ENCODE measurements at regions of chr1 and their contacts with region 1.

Region 1: DNA sequence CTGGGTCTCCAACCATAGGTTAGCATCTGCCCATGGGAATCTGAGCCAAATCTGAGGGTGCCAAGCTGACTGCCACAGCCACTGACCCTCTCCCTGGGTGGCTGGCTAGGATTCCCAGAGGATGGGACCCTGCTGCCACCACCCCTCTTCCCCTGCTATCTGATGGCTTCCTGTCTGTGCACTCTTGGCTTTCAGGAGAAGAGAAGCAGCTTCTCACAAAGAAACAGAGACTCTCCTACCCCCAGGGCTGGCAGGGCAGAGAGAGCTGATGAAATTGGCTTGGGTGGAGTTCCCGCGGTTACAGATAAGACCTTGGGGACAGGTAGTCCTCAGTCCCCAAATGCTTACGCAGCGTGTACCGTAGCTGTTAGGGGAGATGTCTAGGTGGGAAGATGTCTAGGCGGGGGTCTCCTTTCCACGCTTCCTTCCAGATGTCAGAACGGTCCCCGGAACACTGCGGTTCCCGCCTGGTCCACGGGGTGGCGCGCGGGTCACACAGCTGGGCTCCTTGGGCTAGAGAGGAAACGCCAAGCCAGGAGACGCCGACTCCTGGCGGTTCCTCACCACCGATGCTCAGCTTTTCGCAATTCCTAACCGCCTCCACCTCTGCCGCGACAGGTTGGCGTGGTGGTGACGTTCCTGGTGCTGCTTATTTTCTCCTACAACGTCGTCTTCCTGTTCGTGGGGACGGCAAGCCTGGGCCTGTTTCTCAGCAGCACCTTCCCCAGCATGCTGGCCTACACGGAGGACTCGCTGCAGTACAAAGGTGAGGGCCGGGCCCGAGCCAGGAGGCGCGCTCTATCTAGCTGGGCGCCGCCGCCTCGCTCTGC is 40.1 kb downstream of the ELK4 start:
- DNase-seq: peak; percentile 87
- H3K4me3 ChIP-seq: peak overlapping the region; percentile 41 to 59
- H3K27ac ChIP-seq: peak overlapping the region in 1 of 2 experiments; percentile 36; a peak in 1 of 4 replicates
- H3K4me1 ChIP-seq: peaks cover 0 to 10% of the 10 kb centered on the region in 2 experiments; a peak in 1 of 4 replicates
- H3K27me3 ChIP-seq: no peaks in the 10 kb centered on the region
- CTCF ChIP-seq: peak; percentile 97
- EP300 ChIP-seq: no peak
- RAD21 ChIP-seq: peak; percentile 95

Region 2: GRCh38 chr1:205523891-205524793 is 67.6 kb before region 1 on chr1:
- CTCF ChIA-PET with region 1: interaction called, 35 read pairs
- POLR2A ChIA-PET with region 1: no interaction called
- DNase-seq: peak; percentile 87
- H3K4me3 ChIP-seq: peak overlapping the region in 1 of 2 experiments; percentile 14; a peak in 1 of 4 replicates
- H3K27ac ChIP-seq: no peak overlapping the region
- H3K4me1 ChIP-seq: peaks cover 0 to 12% of the 10 kb centered on the region in 2 experiments; a peak in 2 of 4 replicates
- H3K27me3 ChIP-seq: no peaks in the 10 kb centered on the region
- CTCF ChIP-seq: peak; percentile 81
- EP300 ChIP-seq: no peak
- RAD21 ChIP-seq: peak; percentile 98

Region 3: GRCh38 chr1:205543411-205544301 is 48.1 kb before region 1 on chr1:
- CTCF ChIA-PET with region 1: interaction called, 13 read pairs
- POLR2A ChIA-PET with region 1: no interaction called
- DNase-seq: peak; percentile 78
- H3K4me3 ChIP-seq: peak overlapping the region in 1 of 2 experiments; percentile 37; a peak in 2 of 4 replicates
- H3K27ac ChIP-seq: peak overlapping the region; percentile 23 to 88; a peak in 3 of 4 replicates
- H3K4me1 ChIP-seq: peaks cover 0 to 8% of the 10 kb centered on the region in 2 experiments; a peak in 1 of 4 replicates
- H3K27me3 ChIP-seq: no peaks in the 10 kb centered on the region
- CTCF ChIP-seq: no peak
- EP300 ChIP-seq: no peak
- RAD21 ChIP-seq: no peak

Region 4: DNA sequence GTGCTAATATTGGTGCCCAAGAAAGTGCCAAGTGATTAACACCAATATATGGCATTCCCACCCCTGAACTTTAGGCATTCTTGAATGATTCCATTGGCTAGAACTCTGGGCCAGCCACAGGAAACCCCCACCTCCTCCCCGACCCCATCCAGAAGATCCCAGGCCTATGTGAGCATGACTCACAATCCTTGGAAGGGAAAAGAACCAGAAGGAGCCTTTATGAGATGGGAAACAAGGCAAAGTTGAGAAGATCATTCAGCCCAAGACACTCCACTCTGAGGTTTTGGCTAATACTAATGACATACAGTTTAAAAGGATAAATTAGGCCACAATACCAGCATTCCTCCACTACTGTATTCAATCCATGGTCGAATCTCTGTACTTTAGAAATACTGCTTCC is 18.3 kb after region 1 on chr1:
- CTCF ChIA-PET with region 1: interaction called, 13 read pairs
- POLR2A ChIA-PET with region 1: no interaction called
- DNase-seq: no peak
- H3K4me3 ChIP-seq: no peak overlapping the region
- H3K27ac ChIP-seq: peak overlapping the region; percentile 12 to 72; a peak in 2 of 4 replicates
- H3K4me1 ChIP-seq: peaks cover 5 to 24% of the 10 kb centered on the region in 2 experiments; a peak in 3 of 4 replicates
- H3K27me3 ChIP-seq: no peaks in the 10 kb centered on the region
- CTCF ChIP-seq: no peak
- EP300 ChIP-seq: no peak
- RAD21 ChIP-seq: no peak

Region 5: DNA sequence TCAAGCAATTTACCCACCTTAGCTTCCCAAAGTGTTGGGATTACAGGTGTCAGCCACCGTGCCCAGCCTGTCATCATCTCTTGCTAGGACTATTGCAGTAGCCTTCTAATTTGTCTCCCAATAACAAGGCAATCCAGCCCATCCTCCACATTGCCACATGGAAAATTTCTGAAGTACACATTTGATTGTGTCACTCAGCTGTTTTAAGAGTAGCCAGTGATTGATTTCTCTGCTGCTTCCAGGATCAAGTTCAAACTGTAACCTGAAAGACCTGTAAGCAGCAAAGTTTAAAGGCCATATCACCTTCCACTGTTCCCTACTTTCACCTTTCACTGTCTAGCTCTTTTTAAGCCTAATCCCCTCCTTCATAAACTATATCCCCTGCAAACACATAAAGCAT is 47.8 kb after region 1 on chr1:
- CTCF ChIA-PET with region 1: interaction called, 18 read pairs
- POLR2A ChIA-PET with region 1: interaction called, 3 read pairs
- DNase-seq: no peak
- H3K4me3 ChIP-seq: no peak overlapping the region
- H3K27ac ChIP-seq: no peak overlapping the region
- H3K4me1 ChIP-seq: no peaks in the 10 kb centered on the region; a peak in 1 of 4 replicates
- H3K27me3 ChIP-seq: no peaks in the 10 kb centered on the region
- CTCF ChIP-seq: no peak
- EP300 ChIP-seq: no peak
- RAD21 ChIP-seq: no peak

Region 6: GRCh38 chr1:205711104-205712020 is 119.6 kb after region 1 on chr1:
- CTCF ChIA-PET with region 1: interaction called, 58 read pairs
- POLR2A ChIA-PET with region 1: interaction called, 4 read pairs
- DNase-seq: peak; percentile 70
- H3K4me3 ChIP-seq: no peak overlapping the region; a peak in 1 of 4 replicates
- H3K27ac ChIP-seq: peak overlapping the region; percentile 53 to 55
- H3K4me1 ChIP-seq: no peaks in the 10 kb centered on the region; a peak in 1 of 4 replicates
- H3K27me3 ChIP-seq: no peaks in the 10 kb centered on the region
- CTCF ChIP-seq: peak; percentile 96
- EP300 ChIP-seq: no peak
- RAD21 ChIP-seq: peak; percentile 81